AG04450 (cell line): ENCODE measurements at regions of chr17 and their contacts with region 1.

Region 1: GRCh38 chr17:42997984-42998938 is at the start of gene RPL27:
- DNase-seq: peak; percentile 100
- H3K4me3 ChIP-seq: peak within 1 kb of the TSS; percentile 71
- H3K27ac ChIP-seq: peak within 1 kb of the TSS; percentile 93
- H3K27me3 ChIP-seq: no peaks in the 10 kb centered on the region
- CTCF ChIP-seq: peak; percentile 80
- polyA plus RNA-seq, gene RPL27: 4,202 and 4,485 TPM in 2 replicates

Region 2: GRCh38 chr17:42843358-42843934 is 154.8 kb before region 1 on chr17:
- CTCF ChIA-PET with region 1: interaction called, 22 read pairs
- POLR2A ChIA-PET with region 1: interaction called, 3 read pairs
- DNase-seq: peak; percentile 48
- H3K4me3 ChIP-seq: no peak overlapping the region
- H3K27ac ChIP-seq: no peak overlapping the region
- H3K27me3 ChIP-seq: no peaks in the 10 kb centered on the region
- CTCF ChIP-seq: peak; percentile 100

Region 3: DNA sequence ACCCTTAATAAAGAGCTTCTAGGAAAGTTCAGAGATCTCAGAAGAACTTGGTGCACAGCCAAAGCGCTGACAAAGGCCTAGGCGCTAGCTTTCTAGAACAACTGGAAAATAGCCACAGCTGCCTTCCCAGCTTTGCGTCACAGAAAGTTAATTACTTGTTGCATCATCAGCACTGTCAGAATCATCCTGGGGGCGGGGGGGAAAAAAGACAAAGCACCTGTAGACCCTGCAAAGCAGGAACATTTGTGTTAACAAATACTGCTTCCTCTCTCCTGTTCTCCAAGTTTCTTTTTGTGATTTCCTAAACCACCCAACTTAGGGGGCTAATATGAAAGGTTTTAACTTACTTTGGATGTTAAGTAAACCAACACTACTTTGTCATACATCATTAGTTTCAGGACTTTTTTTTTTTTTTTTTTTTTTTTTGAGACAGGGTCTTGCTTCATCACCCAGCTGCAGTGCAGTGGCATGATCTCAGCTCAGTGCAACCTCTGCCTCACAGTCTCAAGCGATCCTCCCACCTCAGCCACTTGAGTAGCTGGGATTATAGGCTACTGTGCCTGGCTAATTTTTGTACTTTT is 29.2 kb before region 1 on chr17:
- CTCF ChIA-PET with region 1: interaction called, 10 read pairs
- POLR2A ChIA-PET with region 1: interaction called, 9 read pairs
- DNase-seq: no peak
- H3K4me3 ChIP-seq: no peak overlapping the region
- H3K27ac ChIP-seq: no peak overlapping the region
- H3K27me3 ChIP-seq: no peaks in the 10 kb centered on the region
- CTCF ChIP-seq: no peak

Region 4: DNA sequence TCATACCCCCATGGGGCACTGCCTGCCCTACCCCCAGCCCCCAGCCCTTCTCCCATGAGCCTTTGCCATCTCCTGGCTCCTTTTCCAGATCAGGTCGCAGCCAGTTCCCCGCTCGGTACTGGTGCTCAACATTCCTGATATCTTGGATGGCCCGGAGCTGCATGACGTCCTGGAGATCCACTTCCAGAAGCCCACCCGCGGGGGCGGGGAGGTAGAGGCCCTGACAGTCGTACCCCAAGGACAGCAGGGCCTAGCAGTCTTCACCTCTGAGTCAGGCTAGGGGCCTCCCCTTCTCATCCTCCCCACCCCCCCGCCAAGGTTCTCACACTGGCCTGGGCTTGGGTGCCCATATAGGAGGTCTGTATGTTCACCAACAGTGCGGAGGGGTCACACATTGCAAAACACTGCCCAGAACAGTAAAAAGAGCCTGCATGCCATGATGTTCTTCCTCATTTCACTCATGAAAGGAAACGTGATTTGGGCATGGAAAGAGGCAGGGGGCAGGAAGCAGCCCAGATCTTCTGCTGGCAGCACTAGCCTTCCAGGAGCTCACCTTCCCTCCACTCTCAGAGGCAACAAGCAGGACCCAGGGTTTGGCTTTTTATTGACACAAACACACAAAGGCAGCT is 15.9 kb after region 1 on chr17:
- CTCF ChIA-PET with region 1: interaction called, 6 read pairs
- POLR2A ChIA-PET with region 1: interaction called, 10 read pairs
- DNase-seq: no peak
- H3K4me3 ChIP-seq: no peak overlapping the region
- H3K27ac ChIP-seq: no peak overlapping the region
- H3K27me3 ChIP-seq: no peaks in the 10 kb centered on the region
- CTCF ChIP-seq: no peak

Region 5: GRCh38 chr17:43024407-43025289 is 26.4 kb after region 1 on chr17 and contains the start of gene RND2:
- CTCF ChIA-PET with region 1: no interaction called
- POLR2A ChIA-PET with region 1: interaction called, 10 read pairs
- DNase-seq: peak; percentile 84
- H3K4me3 ChIP-seq: peak within 1 kb of the TSS; percentile 72
- H3K27ac ChIP-seq: peak within 1 kb of the TSS; percentile 33
- H3K27me3 ChIP-seq: peaks cover 4% of the 10 kb centered on the region
- CTCF ChIP-seq: peak; percentile 87
- polyA plus RNA-seq, gene RND2: 1.7 and 2.1 TPM in 2 replicates

Region 6: DNA sequence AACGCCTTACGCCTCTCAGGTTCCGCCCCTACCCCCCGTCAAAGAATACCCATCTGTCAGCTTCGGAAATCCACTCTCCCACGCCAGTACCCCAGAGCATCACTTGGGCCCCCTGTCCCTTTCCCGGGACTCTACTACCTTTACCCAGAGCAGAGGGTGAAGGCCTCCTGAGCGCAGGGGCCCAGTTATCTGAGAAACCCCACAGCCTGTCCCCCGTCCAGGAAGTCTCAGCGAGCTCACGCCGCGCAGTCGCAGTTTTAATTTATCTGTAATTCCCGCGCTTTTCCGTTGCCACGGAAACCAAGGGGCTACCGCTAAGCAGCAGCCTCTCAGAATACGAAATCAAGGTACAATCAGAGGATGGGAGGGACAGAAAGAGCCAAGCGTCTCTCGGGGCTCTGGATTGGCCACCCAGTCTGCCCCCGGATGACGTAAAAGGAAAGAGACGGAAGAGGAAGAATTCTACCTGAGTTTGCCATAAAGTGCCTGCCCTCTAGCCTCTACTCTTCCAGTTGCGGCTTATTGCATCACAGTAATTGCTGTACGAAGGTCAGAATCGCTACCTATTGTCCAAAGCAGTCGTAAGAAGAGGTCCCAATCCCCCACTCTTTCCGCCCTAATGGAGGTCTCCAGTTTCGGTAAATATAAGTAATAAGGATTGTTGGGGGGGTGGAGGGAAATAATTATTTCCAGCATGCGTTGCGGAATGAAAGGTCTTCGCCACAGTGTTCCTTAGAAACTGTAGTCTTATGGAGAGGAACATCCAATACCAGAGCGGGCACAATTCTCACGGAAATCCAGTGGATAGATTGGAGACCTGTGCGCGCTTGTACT is 127.1 kb after region 1 on chr17 and contains the start of gene BRCA1:
- CTCF ChIA-PET with region 1: no interaction called
- POLR2A ChIA-PET with region 1: no interaction called
- DNase-seq: peak; percentile 95
- H3K4me3 ChIP-seq: peak within 1 kb of the TSS; percentile 89
- H3K27ac ChIP-seq: peak within 1 kb of the TSS; percentile 69
- H3K27me3 ChIP-seq: no peaks in the 10 kb centered on the region
- CTCF ChIP-seq: no peak
- polyA plus RNA-seq, gene BRCA1: 5.1 and 8.1 TPM in 2 replicates

Region 7: GRCh38 chr17:43211480-43212402 is 213.5 kb after region 1 on chr17 and contains the start of gene TMEM106A:
- CTCF ChIA-PET with region 1: no interaction called
- POLR2A ChIA-PET with region 1: interaction called, 11 read pairs
- DNase-seq: peak; percentile 67
- H3K4me3 ChIP-seq: peak within 1 kb of the TSS; percentile 75
- H3K27ac ChIP-seq: peak within 1 kb of the TSS; percentile 80
- H3K27me3 ChIP-seq: no peaks in the 10 kb centered on the region
- CTCF ChIP-seq: peak; percentile 44
- polyA plus RNA-seq, gene TMEM106A: 4.5 and 5.1 TPM in 2 replicates